Activated CD4-positive, alpha-beta T cell treated with anti-CD3 and anti-CD28 coated beads, Interleukin-2, amount 10 ng/mL, durations not matched to agents 24 days and 14 days (primary cell): ENCODE measurements at regions of chr6 and their contacts with region 1.

Region 1: GRCh38 chr6:142146828-142147662 is at the starts of genes NMBR and VTA1:
- DNase-seq: peak; percentile 99
- H3K4me3 Mint-ChIP-seq: peak within 1 kb of the TSS; percentile 96
- H3K27ac Mint-ChIP-seq: peak within 1 kb of the TSS; percentile 91
- H3K4me1 Mint-ChIP-seq: peaks cover 40% of the 10 kb centered on the region
- H3K27me3 Mint-ChIP-seq: no peaks in the 10 kb centered on the region
- total RNA-seq, gene NMBR: not detected in 2 replicates
- total RNA-seq, gene VTA1: 52.6 and 54.0 TPM in 2 replicates

Region 2: GRCh38 chr6:142207265-142207877 is 60.3 kb after region 1 on chr6:
- intact Hi-C with region 1: loop called (anchors 1 kb)
- DNase-seq: peak; percentile 79
- H3K4me3 Mint-ChIP-seq: no peak overlapping the region
- H3K27ac Mint-ChIP-seq: no peak overlapping the region
- H3K4me1 Mint-ChIP-seq: no peaks in the 10 kb centered on the region
- H3K27me3 Mint-ChIP-seq: no peaks in the 10 kb centered on the region

Region 3: DNA sequence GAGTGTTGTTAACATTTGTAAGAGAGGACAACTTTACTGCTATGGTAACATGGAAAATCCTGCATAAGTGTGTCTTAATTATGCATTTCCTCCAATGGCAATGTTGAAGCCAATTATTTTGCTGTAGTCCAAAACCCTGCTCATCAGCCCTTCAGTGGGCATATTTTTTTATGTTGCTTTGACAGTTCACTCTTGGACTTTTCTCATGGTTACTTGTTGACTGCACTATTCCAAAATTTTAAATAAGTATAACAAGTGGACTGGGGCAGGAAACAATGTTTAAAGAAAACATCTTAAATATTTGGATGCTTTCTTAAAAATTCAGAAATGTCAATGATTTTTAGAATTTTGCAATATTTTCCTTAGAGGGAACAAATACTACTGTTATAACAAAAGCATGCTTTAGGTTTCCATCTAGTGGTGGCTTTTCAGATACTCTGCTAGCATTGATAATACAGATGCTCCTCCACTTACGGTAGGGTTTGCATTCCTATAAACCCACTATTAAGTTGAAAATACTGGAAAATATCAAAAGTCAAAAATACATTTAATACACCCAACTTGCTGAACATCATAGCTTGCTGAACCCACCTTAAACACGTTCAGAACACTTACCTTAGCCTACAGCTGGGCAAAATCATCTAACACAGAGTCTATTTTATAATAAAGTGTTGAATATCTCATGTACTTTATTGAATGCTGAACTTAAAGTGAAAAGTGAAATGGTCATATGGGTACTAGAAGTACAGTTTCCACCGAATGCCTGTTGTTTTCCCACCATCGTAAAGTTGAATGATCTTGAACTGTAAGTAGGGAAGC is 241.2 kb after region 1 on chr6:
- intact Hi-C with region 1: loop called (anchors 1 kb)
- DNase-seq: no peak
- H3K4me3 Mint-ChIP-seq: no peak overlapping the region
- H3K27ac Mint-ChIP-seq: no peak overlapping the region
- H3K4me1 Mint-ChIP-seq: no peaks in the 10 kb centered on the region
- H3K27me3 Mint-ChIP-seq: peaks cover 40% of the 10 kb centered on the region

Region 4: DNA sequence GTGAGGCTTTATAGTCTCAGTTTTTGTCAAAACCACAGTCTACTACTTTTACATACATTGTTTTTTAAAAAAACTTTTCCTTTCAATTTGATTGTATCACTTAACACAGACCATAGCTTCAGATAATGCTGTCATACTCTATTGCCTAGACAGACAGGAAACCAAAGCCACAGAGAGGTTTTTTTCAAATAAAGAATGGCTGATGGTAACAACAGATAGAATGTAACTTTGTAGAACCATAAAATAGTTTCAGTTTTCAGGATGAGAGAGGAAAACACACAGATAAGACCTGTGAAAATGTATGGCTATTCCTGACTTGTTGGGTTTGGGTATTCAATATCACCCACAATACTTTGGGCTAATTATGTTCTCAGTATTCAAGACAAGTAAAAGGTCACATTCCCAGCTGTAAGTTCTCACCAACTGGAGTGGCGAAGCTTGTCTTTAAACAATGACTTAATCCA is 248.8 kb after region 1 on chr6:
- intact Hi-C with region 1: loop called (anchors 2 kb)
- DNase-seq: peak; percentile 77
- H3K4me3 Mint-ChIP-seq: peak overlapping the region; percentile 36
- H3K27ac Mint-ChIP-seq: peak overlapping the region; percentile 8
- H3K4me1 Mint-ChIP-seq: peaks cover 13% of the 10 kb centered on the region
- H3K27me3 Mint-ChIP-seq: peaks cover 48% of the 10 kb centered on the region